Activated naive CD4-positive, alpha-beta T cell treated with anti-CD3 and anti-CD28 coated beads for 36 hours (primary cell): ENCODE measurements at regions of chr18 and their contacts with region 1.

Region 1: DNA sequence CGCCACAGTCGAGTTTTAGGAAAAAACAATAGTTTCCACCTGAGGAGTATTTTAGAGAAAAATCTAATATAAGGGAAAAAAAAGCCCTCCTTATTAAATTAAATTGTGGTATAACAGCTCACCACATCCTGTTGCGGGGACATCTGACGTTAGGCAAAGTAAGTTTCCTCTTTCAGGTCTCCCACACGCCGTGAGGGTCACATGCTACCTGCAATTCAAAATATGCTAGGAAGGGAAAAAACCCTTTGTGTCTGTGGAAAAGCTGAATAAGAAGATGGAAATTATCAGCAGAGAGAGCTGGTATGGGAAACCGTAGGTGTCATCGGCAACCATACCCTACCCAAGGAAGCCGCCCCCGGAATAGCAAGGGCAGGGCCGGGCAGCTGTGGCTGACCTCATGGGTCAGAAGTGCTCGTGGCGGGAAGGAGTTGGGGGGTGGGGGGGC is 128.0 kb downstream of the NFATC1 start:
- DNase-seq: peak; percentile 92
- H3K4me3 Mint-ChIP-seq: peak overlapping the region; percentile 83
- H3K27ac Mint-ChIP-seq: peak overlapping the region; percentile 100
- H3K4me1 Mint-ChIP-seq: peaks cover 73% of the 10 kb centered on the region
- H3K27me3 Mint-ChIP-seq: no peaks in the 10 kb centered on the region

Region 2: DNA sequence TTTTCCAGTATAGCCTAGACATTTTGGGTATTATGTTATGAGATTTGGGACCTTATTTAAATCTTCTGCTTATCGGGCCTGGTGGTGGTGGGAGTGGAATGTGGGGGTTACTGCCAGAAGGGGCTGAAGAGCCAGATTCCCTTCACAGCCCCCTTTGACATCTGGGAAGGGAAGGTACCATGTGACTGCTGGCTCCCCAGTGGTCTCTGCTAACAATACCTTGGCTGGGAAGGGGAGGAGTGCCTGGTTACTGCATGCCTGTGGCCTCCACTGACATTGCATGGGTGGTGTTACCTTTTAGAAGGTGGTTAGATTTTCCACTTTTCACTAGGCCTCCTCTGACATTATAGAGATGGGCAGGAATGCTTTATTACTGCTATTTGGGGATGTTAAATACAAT is 446.6 kb before region 1 on chr18:
- CTCF ChIA-PET with region 1: no interaction called
- intact Hi-C with region 1: no loop called
- DNase-seq: no peak
- H3K4me3 Mint-ChIP-seq: no peak overlapping the region
- H3K27ac Mint-ChIP-seq: no peak overlapping the region
- H3K4me1 Mint-ChIP-seq: peaks cover 65% of the 10 kb centered on the region
- H3K27me3 Mint-ChIP-seq: no peaks in the 10 kb centered on the region

Region 3: GRCh38 chr18:79378542-79379250 is 145.1 kb before region 1 on chr18:
- CTCF ChIA-PET with region 1: interaction called, 89 read pairs
- intact Hi-C with region 1: loop called (anchors 1 kb)
- DNase-seq: peak; percentile 91
- H3K4me3 Mint-ChIP-seq: no peak overlapping the region
- H3K27ac Mint-ChIP-seq: no peak overlapping the region
- H3K4me1 Mint-ChIP-seq: peaks cover 9% of the 10 kb centered on the region
- H3K27me3 Mint-ChIP-seq: no peaks in the 10 kb centered on the region

Region 4: GRCh38 chr18:79405781-79406575 is 117.8 kb before region 1 on chr18:
- CTCF ChIA-PET with region 1: interaction called, 5 read pairs
- intact Hi-C with region 1: loop called (anchors 1 kb)
- DNase-seq: peak; percentile 96
- H3K4me3 Mint-ChIP-seq: peak overlapping the region; percentile 81
- H3K27ac Mint-ChIP-seq: peak overlapping the region; percentile 94
- H3K4me1 Mint-ChIP-seq: peaks cover 63% of the 10 kb centered on the region
- H3K27me3 Mint-ChIP-seq: no peaks in the 10 kb centered on the region

Region 5: GRCh38 chr18:79496978-79497637 is 26.6 kb before region 1 on chr18:
- CTCF ChIA-PET with region 1: no interaction called
- intact Hi-C with region 1: loop called (anchors 1 kb)
- DNase-seq: no peak
- H3K4me3 Mint-ChIP-seq: no peak overlapping the region
- H3K27ac Mint-ChIP-seq: no peak overlapping the region
- H3K4me1 Mint-ChIP-seq: peaks cover 15% of the 10 kb centered on the region
- H3K27me3 Mint-ChIP-seq: no peaks in the 10 kb centered on the region

Region 6: GRCh38 chr18:79951578-79952455 is 428.1 kb after region 1 on chr18 and contains the start of gene SLC66A2:
- CTCF ChIA-PET with region 1: no interaction called
- intact Hi-C with region 1: loop called (anchors 5 kb)
- DNase-seq: peak; percentile 94
- H3K4me3 Mint-ChIP-seq: peak within 1 kb of the TSS; percentile 78
- H3K27ac Mint-ChIP-seq: peak within 1 kb of the TSS; percentile 55
- H3K4me1 Mint-ChIP-seq: peaks cover 31% of the 10 kb centered on the region
- H3K27me3 Mint-ChIP-seq: no peaks in the 10 kb centered on the region
- total RNA-seq, gene SLC66A2: 26.0 to 26.8 TPM

Region 7: GRCh38 chr18:80034068-80034851 is 510.5 kb after region 1 on chr18 and contains the start of gene RBFA:
- CTCF ChIA-PET with region 1: no interaction called
- intact Hi-C with region 1: loop called (anchors 1 kb)
- DNase-seq: peak; percentile 100
- H3K4me3 Mint-ChIP-seq: peak within 1 kb of the TSS; percentile 82
- H3K27ac Mint-ChIP-seq: peak within 1 kb of the TSS; percentile 73
- H3K4me1 Mint-ChIP-seq: peaks cover 26% of the 10 kb centered on the region
- H3K27me3 Mint-ChIP-seq: no peaks in the 10 kb centered on the region
- total RNA-seq, gene RBFA: 35.7 to 36.0 TPM